ENCODE measurements at regions of chr1 and their contacts with region 1.

Region 1: GRCh38 chr1:53182111-53182593 is 14.5 kb upstream of the CPT2 start:
- DNase-seq: peak; percentile 79 to 81
- ATAC-seq: peak in 7 of 8 donors; percentile 50 to 84 (median 73)
- H3K4me3 ChIP-seq: no peak overlapping the region
- H3K27ac ChIP-seq: peak overlapping the region in 3 of 10 donors; percentile 3 to 36 (median 33)
- H3K4me1 ChIP-seq: peaks cover 0 to 24% (median 4%) of the 10 kb centered on the region in 9 donors
- H3K27me3 ChIP-seq: no peaks in the 10 kb centered on the region
- CTCF ChIP-seq: peak; percentile 85 to 94 (median 91)

Region 2: DNA sequence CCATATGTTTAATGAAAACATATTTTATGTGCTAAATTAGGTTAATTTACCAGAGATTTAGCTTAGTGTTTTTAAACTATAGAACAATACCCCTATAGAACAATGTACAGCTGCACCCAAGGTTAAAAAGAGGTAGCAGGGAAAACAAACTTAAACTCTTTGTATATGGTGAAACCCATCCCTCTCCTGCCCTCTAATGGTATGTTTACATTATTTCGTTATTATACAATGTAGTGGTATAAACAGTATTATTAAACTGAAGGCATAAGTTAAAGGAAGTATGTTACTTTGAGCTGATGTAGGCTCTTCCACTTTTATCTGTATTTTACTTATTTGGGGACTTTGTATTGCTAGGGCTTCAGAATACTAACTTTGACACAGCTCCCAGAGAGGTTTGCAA is 356.3 kb before region 1 on chr1:
- intact Hi-C with region 1: loop called in 1 of 10 experiments (anchors 10 kb)
- DNase-seq: no peak
- ATAC-seq: no peak
- H3K4me3 ChIP-seq: no peak overlapping the region
- H3K27ac ChIP-seq: no peak overlapping the region
- H3K4me1 ChIP-seq: no peaks in the 10 kb centered on the region
- H3K27me3 ChIP-seq: no peaks in the 10 kb centered on the region
- CTCF ChIP-seq: peak in 1 of 9 donors; percentile 17

Region 3: DNA sequence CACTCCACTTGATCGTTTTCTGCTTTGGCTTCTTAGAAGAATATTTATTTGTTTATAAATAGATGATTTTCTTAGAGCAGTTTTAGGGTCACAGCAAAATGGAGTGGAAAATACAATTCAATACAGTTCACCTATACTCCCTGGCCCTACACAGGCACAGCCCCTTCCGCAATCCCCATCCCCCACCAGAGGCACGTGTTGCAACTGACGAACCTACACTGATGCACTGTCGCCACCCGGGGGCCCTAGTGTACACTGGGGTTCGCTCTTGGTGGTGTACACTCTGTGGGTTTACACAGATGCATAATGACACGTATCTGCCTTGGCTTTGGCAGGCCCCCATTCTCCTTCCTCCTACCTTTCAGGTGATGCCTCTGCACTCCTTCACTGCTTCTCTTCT is 268.6 kb before region 1 on chr1:
- intact Hi-C with region 1: loop called in 5 of 10 experiments (anchors 10 kb)
- DNase-seq: no peak
- ATAC-seq: no peak
- H3K4me3 ChIP-seq: no peak overlapping the region
- H3K27ac ChIP-seq: no peak overlapping the region
- H3K4me1 ChIP-seq: peaks cover 0 to 35% (median 12%) of the 10 kb centered on the region in 9 donors
- H3K27me3 ChIP-seq: no peaks in the 10 kb centered on the region
- CTCF ChIP-seq: no peak

Region 4: DNA sequence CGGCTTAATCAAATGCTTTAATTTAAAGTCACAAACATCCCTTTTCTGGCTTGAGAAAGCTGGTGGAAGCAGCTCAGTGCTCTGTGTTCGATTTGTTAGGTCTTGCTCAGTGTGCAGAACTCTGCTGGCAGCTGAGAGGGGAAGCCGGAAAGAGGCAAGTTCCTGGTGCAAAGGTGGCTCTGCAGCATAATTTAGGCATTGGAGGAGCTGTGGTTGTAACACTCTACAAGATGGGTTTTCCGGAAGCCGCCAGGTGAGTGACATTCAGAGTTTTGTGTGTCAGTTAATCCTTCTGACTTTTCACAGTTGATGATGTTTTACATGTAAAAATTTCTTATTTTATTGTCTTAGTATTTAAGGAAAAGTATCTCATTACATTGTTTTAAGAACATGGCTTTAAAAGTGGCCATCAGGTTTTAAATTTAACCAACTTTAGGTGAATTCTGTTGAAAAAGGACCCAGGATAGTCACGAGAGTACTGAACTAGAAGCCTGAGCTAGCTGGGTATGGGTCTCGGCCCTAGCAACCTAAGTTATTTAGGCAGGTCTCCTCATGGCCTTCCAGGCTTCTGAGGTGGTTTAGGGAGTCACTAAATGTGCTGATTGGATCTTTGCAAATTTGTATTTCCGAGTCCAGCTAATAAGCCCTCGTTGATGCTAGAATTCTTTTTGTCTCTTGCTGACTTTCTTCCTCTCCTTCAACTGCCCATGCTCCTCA is 167.2 kb before region 1 on chr1:
- intact Hi-C with region 1: loop called in 4 of 10 experiments (anchors 2 to 10 kb)
- DNase-seq: peak; percentile 42 to 88
- ATAC-seq: peak; percentile 89 to 98 (median 96)
- H3K4me3 ChIP-seq: peak overlapping the region; percentile 38 to 71 (median 59)
- H3K27ac ChIP-seq: peak overlapping the region in 8 of 10 donors; percentile 34 to 83 (median 60)
- H3K4me1 ChIP-seq: peaks cover 0 to 33% (median 25%) of the 10 kb centered on the region in 9 donors
- H3K27me3 ChIP-seq: no peaks in the 10 kb centered on the region
- CTCF ChIP-seq: no peak

Region 5: GRCh38 chr1:53238197-53239155 is 56.3 kb after region 1 on chr1 and contains the start of gene MAGOH:
- intact Hi-C with region 1: no loop called
- DNase-seq: peak; percentile 93 to 94
- ATAC-seq: peak; percentile 96 to 99 (median 98)
- H3K4me3 ChIP-seq: peak within 1 kb of the TSS; percentile 74 to 96 (median 86)
- H3K27ac ChIP-seq: peak within 1 kb of the TSS in 9 of 10 donors; percentile 43 to 90 (median 74)
- H3K4me1 ChIP-seq: peaks cover 4 to 33% (median 24%) of the 10 kb centered on the region in 9 donors
- H3K27me3 ChIP-seq: no peaks in the 10 kb centered on the region
- CTCF ChIP-seq: no peak
- total RNA-seq, gene MAGOH: 17.3 to 31.5 (median 22.6) TPM

Region 6: DNA sequence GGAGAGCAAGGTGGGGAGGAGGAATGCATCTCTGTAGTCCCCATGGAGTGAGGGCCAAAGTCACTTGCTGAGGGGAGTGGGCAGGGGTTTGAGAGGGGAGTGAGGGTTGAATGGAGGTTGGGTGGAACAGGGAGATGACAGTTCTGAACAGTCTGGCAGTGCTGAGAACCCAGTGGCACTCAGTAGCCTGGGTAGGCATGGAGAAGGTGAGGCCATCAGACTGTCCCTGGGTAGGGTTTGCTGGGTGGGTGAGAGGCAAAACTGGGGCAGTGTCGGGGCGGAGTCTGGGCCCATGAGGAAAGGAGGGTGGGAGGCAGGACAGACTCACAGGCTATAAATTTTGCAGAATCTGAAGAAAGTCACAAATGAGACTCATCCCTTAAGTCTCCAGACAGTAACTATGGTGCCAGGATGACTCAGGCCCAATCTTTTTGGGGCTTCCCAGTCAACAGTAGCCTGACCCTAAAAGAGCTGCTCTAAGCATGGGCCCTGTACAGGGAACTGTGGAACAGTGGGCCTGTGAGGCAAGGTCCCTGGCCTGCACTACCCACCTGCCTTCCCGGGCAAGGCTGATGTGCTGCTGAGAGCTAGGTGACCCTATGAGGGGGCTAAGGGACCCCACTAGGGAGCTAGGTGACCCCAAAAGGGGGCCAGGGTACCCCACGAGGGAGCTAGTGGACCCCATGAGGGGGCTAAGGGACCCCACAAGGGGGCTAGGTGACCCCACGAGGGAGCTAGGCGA is 226.0 kb after region 1 on chr1:
- intact Hi-C with region 1: no loop called
- DNase-seq: no peak
- ATAC-seq: no peak
- H3K4me3 ChIP-seq: no peak overlapping the region
- H3K27ac ChIP-seq: no peak overlapping the region
- H3K4me1 ChIP-seq: no peaks in the 10 kb centered on the region
- H3K27me3 ChIP-seq: peaks cover 0 to 51% (median 23%) of the 10 kb centered on the region in 7 donors
- CTCF ChIP-seq: no peak